ENCODE measurements at regions of chr3 and their contacts with region 1.

Region 1: GRCh38 chr3:154235330-154235729 is 89.0 kb downstream of the DHX36 start:
- DNase-seq: no peak
- H3K4me3 ChIP-seq: no peak overlapping the region
- H3K27ac ChIP-seq: no peak overlapping the region
- H3K27me3 ChIP-seq: peaks cover 0 to 16% (median 0%) of the 10 kb centered on the region in 45 donors
- CTCF ChIP-seq: no peak

Region 2: DNA sequence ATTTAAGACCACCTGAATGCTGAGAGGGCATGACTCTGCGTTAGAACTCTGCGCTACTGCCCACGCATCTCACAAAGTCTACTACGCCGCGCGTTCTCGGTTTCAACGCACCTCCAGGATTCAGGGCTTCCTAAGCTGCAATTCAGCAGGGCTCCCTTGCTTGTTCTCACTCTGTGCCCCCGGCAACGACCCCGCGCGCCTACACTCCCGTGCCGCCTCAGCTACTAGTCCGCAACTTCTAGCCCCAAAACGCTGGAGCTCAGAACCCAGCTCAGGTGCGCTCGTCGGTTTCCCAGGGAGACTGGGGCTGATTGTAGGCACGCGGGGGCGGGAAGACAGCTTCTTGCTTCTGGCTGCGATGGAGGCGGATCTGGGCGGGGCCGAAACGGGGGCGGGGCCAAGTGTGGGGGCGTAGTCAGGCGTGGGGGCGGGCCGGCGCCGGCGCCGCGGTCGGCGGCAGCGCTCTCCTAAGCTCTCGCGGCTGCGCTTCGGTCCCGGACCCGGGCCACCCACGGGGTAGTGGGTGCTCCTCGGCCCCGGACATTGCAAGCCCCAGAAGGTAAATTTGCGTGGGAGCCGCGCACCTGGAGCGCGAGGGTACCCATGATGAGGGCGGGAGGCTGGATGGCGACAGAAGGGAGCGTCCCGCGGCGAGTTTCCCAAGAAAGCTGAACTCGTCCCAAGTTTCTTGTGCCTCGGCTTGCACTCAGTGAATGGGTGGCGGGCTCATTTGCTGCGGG is 114.2 kb before region 1 on chr3 and contains the start of gene ARHGEF26:
- intact Hi-C with region 1: loop called in 1 of 2 experiments (anchors 10 kb)
- DNase-seq: peak in 9 of 10 donors; percentile 23 to 75 (median 66)
- H3K4me3 ChIP-seq: peak within 1 kb of the TSS; percentile 42 to 78 (median 66)
- H3K27ac ChIP-seq: peak within 1 kb of the TSS in 41 of 59 donors; percentile 2 to 78 (median 52)
- H3K27me3 ChIP-seq: peaks cover 0 to 62% (median 14%) of the 10 kb centered on the region in 45 donors
- CTCF ChIP-seq: no peak
- total RNA-seq, gene ARHGEF26: 11.4 to 65.2 (median 22.1) TPM